Prostate gland (tissue), 2 donors: ENCODE measurements at regions of chr21 and their contacts with region 1.

Region 1: GRCh38 chr21:16330082-16330907 is 600.5 kb downstream of the USP25 start:
- DNase-seq: peak; percentile 67
- H3K4me3 ChIP-seq: no peak overlapping the region
- H3K27ac ChIP-seq: peak overlapping the region in 1 of 2 donors; percentile 37
- H3K4me1 ChIP-seq: no peaks in the 10 kb centered on the region
- H3K27me3 ChIP-seq: no peaks in the 10 kb centered on the region
- CTCF ChIP-seq: peak; percentile 45 to 80 (median 75)
- POLR2A ChIP-seq: no peak

Region 2: DNA sequence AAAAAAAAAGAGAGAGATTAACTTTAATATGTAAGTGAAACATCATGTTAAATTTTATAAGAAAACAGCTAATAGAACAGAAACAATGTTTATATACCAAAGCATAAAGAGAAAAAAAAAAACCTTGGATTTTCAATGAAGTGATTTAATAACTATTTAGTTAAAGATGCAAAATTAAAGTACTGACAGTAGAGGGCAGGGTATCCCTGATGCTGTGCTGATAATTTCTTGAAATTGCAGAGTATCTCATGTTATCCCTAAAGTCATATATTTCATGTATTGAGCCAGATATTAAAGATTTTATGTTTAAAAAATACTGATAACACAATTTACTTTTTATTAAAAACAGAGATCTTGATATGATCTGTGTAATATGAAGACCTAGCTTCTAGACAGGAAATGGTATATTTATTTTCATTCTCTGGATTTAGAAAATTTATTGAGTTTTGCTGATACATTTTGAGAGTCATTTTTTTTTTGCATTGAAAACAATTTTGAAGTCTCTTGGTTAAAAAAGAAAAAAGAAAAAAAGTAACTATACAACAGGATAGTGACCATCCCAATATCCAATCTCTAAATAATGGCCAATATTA is 327.3 kb before region 1 on chr21:
- intact Hi-C with region 1: loop called (anchors 10 kb)
- DNase-seq: no peak
- H3K4me3 ChIP-seq: no peak overlapping the region
- H3K27ac ChIP-seq: peak overlapping the region; percentile 15 to 51
- H3K4me1 ChIP-seq: no peaks in the 10 kb centered on the region
- H3K27me3 ChIP-seq: no peaks in the 10 kb centered on the region
- CTCF ChIP-seq: peak in 3 of 4 experiments; percentile 18 to 42 (median 41)
- POLR2A ChIP-seq: no peak

Region 3: DNA sequence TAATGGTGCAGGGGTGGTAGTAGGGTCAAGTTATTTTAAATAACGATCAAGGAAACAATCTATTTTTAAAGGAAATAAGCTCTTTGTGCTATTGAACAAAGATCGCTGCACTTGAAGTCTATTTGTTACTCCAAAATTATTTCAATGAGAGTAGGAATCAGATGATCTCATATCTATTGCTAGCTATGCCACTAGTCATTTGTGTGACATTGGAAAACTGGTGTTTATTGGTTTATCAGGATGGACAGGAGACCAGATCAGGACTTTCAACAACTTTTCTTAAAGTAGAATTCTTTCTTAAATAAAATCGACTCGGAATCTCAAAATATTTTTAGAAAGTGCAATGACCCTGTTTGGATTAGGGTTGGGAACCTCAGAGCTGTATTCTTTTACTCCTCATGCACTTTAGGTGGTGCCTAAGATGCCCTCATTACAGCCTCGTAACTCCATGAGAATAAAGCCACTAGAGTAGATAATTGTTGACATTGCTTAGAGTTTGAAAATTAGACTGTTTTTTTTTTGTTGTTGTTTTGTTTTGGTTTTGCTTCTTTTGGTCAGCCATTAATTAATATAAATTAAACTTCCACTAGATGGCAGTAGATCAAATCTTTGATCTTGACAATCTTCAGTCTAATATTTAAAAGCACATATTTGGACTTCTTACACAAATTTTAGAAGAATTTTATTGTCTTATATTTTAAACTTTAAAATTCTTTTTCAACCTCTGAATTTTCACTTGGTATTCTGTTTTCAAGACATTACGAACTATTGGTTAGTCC is 248.1 kb before region 1 on chr21:
- intact Hi-C with region 1: loop called (anchors 5 kb)
- DNase-seq: no peak
- H3K4me3 ChIP-seq: no peak overlapping the region
- H3K27ac ChIP-seq: peak overlapping the region; percentile 46 to 56
- H3K4me1 ChIP-seq: no peaks in the 10 kb centered on the region
- H3K27me3 ChIP-seq: no peaks in the 10 kb centered on the region
- CTCF ChIP-seq: peak in 3 of 4 experiments; percentile 41 to 70 (median 47)
- POLR2A ChIP-seq: no peak

Region 4: GRCh38 chr21:16294128-16294527 is 36.2 kb before region 1 on chr21:
- intact Hi-C with region 1: no loop called
- DNase-seq: no peak
- H3K4me3 ChIP-seq: no peak overlapping the region
- H3K27ac ChIP-seq: no peak overlapping the region
- H3K4me1 ChIP-seq: no peaks in the 10 kb centered on the region
- H3K27me3 ChIP-seq: no peaks in the 10 kb centered on the region
- CTCF ChIP-seq: no peak
- POLR2A ChIP-seq: no peak

Region 5: DNA sequence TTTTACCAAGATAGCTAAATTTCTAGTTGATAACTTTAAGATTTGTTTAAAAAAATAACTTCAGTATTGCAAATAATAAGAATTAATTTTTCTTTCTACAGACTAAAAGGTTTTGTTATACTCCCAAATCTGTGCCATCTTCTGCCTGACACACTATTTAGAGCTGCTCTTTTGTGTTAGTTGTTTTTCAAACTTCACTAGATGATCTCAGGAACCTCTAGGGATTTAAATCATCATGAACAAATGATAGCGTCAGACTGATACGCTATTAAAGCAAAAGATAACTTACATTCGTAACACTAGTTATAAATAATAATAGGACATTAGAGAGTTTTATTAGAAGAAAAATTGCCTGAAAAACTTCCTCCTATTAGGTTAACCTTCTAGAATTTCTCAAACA is 939.5 kb after region 1 on chr21:
- intact Hi-C with region 1: loop called (anchors 10 kb)
- DNase-seq: no peak
- H3K4me3 ChIP-seq: no peak overlapping the region
- H3K27ac ChIP-seq: no peak overlapping the region
- H3K4me1 ChIP-seq: no peaks in the 10 kb centered on the region
- H3K27me3 ChIP-seq: no peaks in the 10 kb centered on the region
- CTCF ChIP-seq: no peak
- POLR2A ChIP-seq: no peak